Ascending aorta (tissue), 2 donors: ENCODE measurements at regions of chr1 and their contacts with region 1.

Region 1: GRCh38 chr1:42766741-42767509 is at the starts of genes C1orf50 and P3H1:
- DNase-seq: peak; percentile 99 to 100
- H3K4me3 ChIP-seq: peak within 1 kb of the TSS; percentile 86 to 88
- H3K27ac ChIP-seq: peak within 1 kb of the TSS; percentile 84 to 91
- H3K4me1 ChIP-seq: peaks cover 0 to 19% of the 10 kb centered on the region in 2 donors
- H3K27me3 ChIP-seq: no peaks in the 10 kb centered on the region
- CTCF ChIP-seq: no peak
- total RNA-seq, gene C1orf50: 0.64 TPM
- total RNA-seq, gene P3H1: 72.2 TPM

Region 2: GRCh38 chr1:42335050-42335808 is 431.7 kb before region 1 on chr1 and contains the start of gene FOXJ3:
- intact Hi-C with region 1: loop called (anchors 5 kb)
- DNase-seq: peak; percentile 43 to 93
- H3K4me3 ChIP-seq: peak within 1 kb of the TSS; percentile 95 to 99
- H3K27ac ChIP-seq: peak within 1 kb of the TSS; percentile 88 to 91
- H3K4me1 ChIP-seq: peaks cover 0 to 11% of the 10 kb centered on the region in 2 donors
- H3K27me3 ChIP-seq: no peaks in the 10 kb centered on the region
- CTCF ChIP-seq: no peak
- total RNA-seq, gene FOXJ3: 62.8 TPM

Region 3: DNA sequence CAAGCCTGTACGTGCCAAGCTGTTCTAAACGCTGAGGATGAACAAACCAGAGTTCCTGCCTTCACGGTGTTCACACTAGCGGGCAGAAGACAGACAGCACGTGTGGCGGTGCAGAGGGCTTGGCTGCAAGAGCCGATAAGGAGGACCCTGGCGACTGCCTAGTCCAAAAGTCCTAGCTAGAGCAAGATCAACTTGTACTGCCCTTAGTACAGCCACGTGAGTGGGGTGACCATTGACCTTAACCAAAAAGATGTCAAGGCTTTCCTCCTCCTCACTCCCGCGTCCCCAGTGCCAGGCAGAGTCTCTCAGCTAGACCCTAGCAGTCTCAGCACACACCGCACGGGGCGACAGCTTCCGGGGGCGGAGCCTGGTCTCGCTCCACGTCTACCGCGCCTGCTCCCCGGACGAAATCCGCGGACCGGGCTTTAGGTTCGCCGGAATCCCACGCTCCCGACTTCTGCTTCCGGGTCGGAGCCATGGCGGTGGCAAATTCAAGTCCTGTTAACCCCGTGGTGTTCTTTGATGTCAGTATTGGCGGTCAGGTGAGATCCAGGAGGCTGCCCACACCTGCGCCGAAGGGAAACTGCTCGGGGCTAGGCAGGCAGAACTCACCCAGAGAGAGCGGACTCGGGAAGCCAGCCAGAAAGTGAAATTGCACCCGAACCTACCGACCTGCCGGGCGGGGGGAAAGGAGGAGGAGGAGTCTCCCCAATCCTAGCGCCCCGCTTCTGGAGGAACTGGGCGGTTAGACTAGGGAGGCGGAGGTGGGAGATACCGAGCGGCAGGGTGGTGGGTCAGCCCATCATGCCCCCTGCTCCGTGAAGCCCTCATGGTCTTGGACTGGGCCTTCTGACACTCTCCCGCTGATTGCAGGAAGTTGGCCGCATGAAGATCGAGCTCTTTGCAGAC is 108.7 kb before region 1 on chr1 and contains the start of gene PPIH:
- intact Hi-C with region 1: loop called (anchors 2 kb)
- DNase-seq: peak; percentile 76 to 97
- H3K4me3 ChIP-seq: peak within 1 kb of the TSS; percentile 65 to 72
- H3K27ac ChIP-seq: peak within 1 kb of the TSS; percentile 67 to 78
- H3K4me1 ChIP-seq: peaks cover 3 to 14% of the 10 kb centered on the region in 2 donors
- H3K27me3 ChIP-seq: no peaks in the 10 kb centered on the region
- CTCF ChIP-seq: peak in 2 of 3 experiments; percentile 37 to 40
- total RNA-seq, gene PPIH: 2.2 TPM

Region 4: DNA sequence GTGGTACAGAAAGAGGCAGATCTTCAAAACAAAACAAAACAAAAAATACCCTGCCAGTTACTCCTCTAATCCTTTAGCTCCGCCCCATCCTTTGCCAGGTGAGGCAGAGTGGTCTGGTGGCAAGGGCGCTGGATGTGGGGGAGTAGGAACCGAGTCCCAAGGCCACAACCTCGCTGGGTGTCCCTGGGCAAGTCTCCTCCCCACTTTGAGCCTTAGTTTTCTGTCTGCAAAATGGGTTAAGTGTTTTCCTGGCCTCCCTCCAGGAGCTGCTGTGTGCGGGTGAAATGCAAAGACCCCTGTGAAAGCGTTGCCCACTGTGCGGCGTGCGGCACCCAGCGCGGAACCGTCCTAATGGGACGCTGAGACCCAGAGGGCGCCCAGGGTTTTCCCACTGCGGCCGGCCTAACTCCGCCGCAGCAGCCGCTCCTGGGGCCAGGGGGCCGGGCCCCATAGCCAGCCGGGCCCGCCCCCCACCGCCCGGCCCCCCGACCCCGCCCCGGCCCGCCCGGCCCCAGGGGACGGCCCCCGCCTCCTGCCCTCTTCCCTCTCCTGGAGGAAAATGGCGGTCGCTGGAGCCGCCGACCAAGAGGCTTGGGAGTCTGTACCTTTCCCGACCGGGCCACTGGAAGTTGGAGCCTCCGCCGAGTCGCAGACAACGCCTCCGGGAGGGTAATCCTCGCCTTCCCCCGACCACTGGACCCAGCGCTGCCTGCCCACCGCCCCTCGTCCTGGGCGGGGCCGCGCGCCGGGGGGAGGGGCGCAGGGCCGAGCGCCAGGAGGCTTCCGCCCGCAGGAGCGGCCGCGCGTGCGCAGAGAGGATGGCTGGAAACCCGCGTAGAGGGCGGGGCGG is 49.9 kb after region 1 on chr1 and contains the starts of genes ERMAP and SVBP:
- intact Hi-C with region 1: loop called (anchors 1 kb)
- DNase-seq: peak; percentile 63 to 94
- H3K4me3 ChIP-seq: peak within 1 kb of the TSS; percentile 81 to 88
- H3K27ac ChIP-seq: peak within 1 kb of the TSS; percentile 96 to 99
- H3K4me1 ChIP-seq: peaks cover 4 to 9% of the 10 kb centered on the region in 2 donors
- H3K27me3 ChIP-seq: no peaks in the 10 kb centered on the region
- CTCF ChIP-seq: no peak
- total RNA-seq, gene ERMAP: 0.11 TPM
- total RNA-seq, gene SVBP: 1.2 TPM

Region 5: DNA sequence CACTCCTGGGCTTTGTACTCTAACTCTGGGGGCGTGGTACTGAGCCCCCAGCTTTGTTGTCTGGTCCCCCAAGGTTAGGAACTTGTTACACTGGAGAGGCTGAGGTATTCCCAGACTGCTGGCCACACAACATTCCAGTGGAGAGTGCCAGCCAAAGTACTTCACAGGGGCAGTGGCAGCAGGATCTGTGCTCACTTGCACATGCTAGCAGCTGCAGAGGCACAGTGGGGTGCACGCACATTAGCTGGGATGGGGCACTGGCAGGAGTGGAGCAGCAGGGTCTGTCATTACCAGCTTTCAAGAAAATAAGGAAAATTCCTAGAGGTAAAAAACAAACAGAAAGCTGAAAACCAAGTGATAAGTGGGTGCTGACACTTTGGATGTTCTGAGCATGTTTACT is 110.5 kb after region 1 on chr1:
- intact Hi-C with region 1: no loop called
- DNase-seq: no peak
- H3K4me3 ChIP-seq: no peak overlapping the region
- H3K27ac ChIP-seq: no peak overlapping the region
- H3K4me1 ChIP-seq: no peaks in the 10 kb centered on the region
- H3K27me3 ChIP-seq: no peaks in the 10 kb centered on the region
- CTCF ChIP-seq: no peak

Region 6: GRCh38 chr1:43073490-43074230 is 306.7 kb after region 1 on chr1:
- intact Hi-C with region 1: loop called (anchors 5 kb)
- DNase-seq: peak in 1 of 2 donors; percentile 84
- H3K4me3 ChIP-seq: no peak overlapping the region
- H3K27ac ChIP-seq: no peak overlapping the region
- H3K4me1 ChIP-seq: peaks cover 0 to 1% of the 10 kb centered on the region in 2 donors
- H3K27me3 ChIP-seq: no peaks in the 10 kb centered on the region
- CTCF ChIP-seq: peak; percentile 78 to 88 (median 87)